ENCODE measurements at regions of chr9 and their contacts with region 1.

Region 1: DNA sequence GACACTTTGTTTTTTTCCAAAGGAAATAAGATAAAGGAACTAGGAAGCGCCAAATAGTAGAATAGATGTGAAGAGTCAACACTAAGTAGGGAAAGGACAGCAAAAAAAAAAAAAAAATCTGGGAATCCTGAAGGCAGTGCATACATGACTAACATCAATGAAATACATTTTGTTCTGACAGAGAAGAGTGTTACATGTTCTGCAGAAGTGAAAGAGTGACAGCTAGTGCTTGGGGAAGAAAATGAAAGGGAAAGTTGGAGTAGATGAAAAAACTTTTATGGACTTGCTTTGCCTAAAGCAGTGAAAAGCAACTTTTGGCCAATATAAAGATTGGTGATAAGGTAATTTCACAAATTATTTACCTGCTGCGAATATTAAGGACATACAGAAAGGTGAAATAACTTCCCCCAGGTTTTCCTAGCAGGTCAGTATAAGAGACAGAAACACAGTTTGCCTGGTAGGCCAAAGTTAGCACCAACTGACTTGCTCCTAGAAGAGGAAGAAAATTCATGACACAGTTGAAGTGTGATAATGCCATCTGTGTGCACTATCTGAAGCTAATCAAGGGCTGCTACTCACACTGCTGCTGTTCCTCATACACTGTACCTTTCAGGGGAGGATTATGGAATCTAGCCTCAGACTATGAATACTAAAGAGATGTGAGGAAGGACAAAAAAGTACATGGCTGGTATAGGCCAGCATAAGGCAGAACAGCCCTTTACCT is 38.6 kb downstream of the RANBP6 start:
- DNase-seq: peak; percentile 11
- ATAC-seq: peak; percentile 88
- H3K4me3 ChIP-seq: no peak overlapping the region
- H3K27ac ChIP-seq: peak overlapping the region; percentile 57
- H3K4me1 ChIP-seq: peaks cover 4% of the 10 kb centered on the region; the same call in 1 of the 2 replicates
- H3K27me3 ChIP-seq: no peaks in the 10 kb centered on the region
- CTCF ChIP-seq: peak; percentile 32 to 68 (median 36); a peak in 4 of 6 replicates
- EP300 ChIP-seq: no peak
- POLR2A ChIP-seq: no peak
- RAD21 ChIP-seq: peak; percentile 70

Region 2: GRCh38 chr9:5205071-5205470 is 771.8 kb before region 1 on chr9:
- CTCF ChIA-PET with region 1: no interaction called
- POLR2A ChIA-PET with region 1: no interaction called
- RAD21 ChIA-PET with region 1: no interaction called
- SMC1A ChIA-PET with region 1: no interaction called
- in situ Hi-C with region 1: no loop called
- intact Hi-C with region 1: no loop called
- DNase-seq: no peak
- ATAC-seq: peak; percentile 37
- H3K4me3 ChIP-seq: no peak overlapping the region
- H3K27ac ChIP-seq: no peak overlapping the region
- H3K4me1 ChIP-seq: no peaks in the 10 kb centered on the region
- H3K27me3 ChIP-seq: no peaks in the 10 kb centered on the region
- CTCF ChIP-seq: no peak
- EP300 ChIP-seq: no peak
- POLR2A ChIP-seq: no peak
- RAD21 ChIP-seq: no peak

Region 3: GRCh38 chr9:5958273-5958672 is 18.6 kb before region 1 on chr9:
- CTCF ChIA-PET with region 1: interaction called, 6 read pairs
- POLR2A ChIA-PET with region 1: no interaction called
- RAD21 ChIA-PET with region 1: interaction called, 6 read pairs
- SMC1A ChIA-PET with region 1: interaction called, 10 read pairs
- in situ Hi-C with region 1: no loop called
- intact Hi-C with region 1: no loop called
- DNase-seq: peak; percentile 19
- ATAC-seq: peak; percentile 87
- H3K4me3 ChIP-seq: no peak overlapping the region
- H3K27ac ChIP-seq: no peak overlapping the region
- H3K4me1 ChIP-seq: peaks cover 4% of the 10 kb centered on the region; the same call in 1 of the 2 replicates
- H3K27me3 ChIP-seq: no peaks in the 10 kb centered on the region
- CTCF ChIP-seq: no peak
- EP300 ChIP-seq: peak in 1 of 2 experiments; percentile 68; a peak in 1 of 4 replicates
- POLR2A ChIP-seq: no peak
- RAD21 ChIP-seq: no peak

Region 4: DNA sequence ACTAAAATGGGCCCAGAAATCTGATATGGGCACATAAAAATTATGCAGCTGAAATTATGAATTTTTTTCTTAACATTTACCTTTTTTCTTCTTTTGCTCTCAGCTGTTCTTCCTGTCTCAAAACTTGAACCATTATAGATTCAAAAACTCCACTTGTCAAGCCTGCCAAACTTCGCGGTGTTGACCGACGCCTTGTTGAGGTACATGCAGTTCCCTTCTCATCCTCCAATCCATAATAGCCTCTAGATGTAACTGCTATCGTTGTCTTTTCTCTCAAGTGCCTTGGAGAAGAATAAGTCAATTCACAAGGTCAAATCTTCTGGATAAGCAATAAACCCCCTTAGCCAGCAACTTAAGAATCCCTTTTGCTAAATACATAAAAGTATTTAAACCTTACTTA is 11.4 kb after region 1 on chr9:
- CTCF ChIA-PET with region 1: interaction called, 4 read pairs
- POLR2A ChIA-PET with region 1: interaction called, 4 read pairs
- RAD21 ChIA-PET with region 1: interaction called, 5 read pairs
- SMC1A ChIA-PET with region 1: interaction called, 19 read pairs
- in situ Hi-C with region 1: no loop called
- intact Hi-C with region 1: no loop called
- DNase-seq: no peak
- ATAC-seq: no peak
- H3K4me3 ChIP-seq: no peak overlapping the region
- H3K27ac ChIP-seq: no peak overlapping the region
- H3K4me1 ChIP-seq: no peaks in the 10 kb centered on the region
- H3K27me3 ChIP-seq: no peaks in the 10 kb centered on the region
- CTCF ChIP-seq: no peak
- EP300 ChIP-seq: no peak
- POLR2A ChIP-seq: no peak
- RAD21 ChIP-seq: no peak